GM12878 (cell line): ENCODE measurements at regions of chr19 and their contacts with region 1.

Region 1: GRCh38 chr19:19459707-19460251 is 54.3 kb downstream of the GATAD2A start:
- DNase-seq: no peak
- ATAC-seq: peak; percentile 75
- H3K4me3 ChIP-seq: peak overlapping the region; percentile 29; the same call in 1 of the 2 replicates
- H3K27ac ChIP-seq: peak overlapping the region; percentile 79
- H3K4me1 ChIP-seq: peaks cover 54% of the 10 kb centered on the region
- H3K27me3 ChIP-seq: no peaks in the 10 kb centered on the region
- CTCF ChIP-seq: no peak
- EP300 ChIP-seq: no peak
- POLR2A ChIP-seq: no peak; the same call in 1 of the 2 replicates
- RAD21 ChIP-seq: no peak

Region 2: GRCh38 chr19:19444681-19445155 is 15.1 kb before region 1 on chr19:
- CTCF ChIA-PET with region 1: interaction called, 7 read pairs
- POLR2A ChIA-PET with region 1: interaction called, 7 read pairs
- RAD21 ChIA-PET with region 1: interaction called, 5 read pairs
- SMC1A ChIA-PET with region 1: interaction called, 21 read pairs
- in situ Hi-C with region 1: no loop called
- intact Hi-C with region 1: no loop called
- DNase-seq: no peak
- ATAC-seq: peak; percentile 86
- H3K4me3 ChIP-seq: no peak overlapping the region; the same call in 1 of the 2 replicates
- H3K27ac ChIP-seq: peak overlapping the region; percentile 82
- H3K4me1 ChIP-seq: peaks cover 47% of the 10 kb centered on the region
- H3K27me3 ChIP-seq: no peaks in the 10 kb centered on the region
- CTCF ChIP-seq: no peak
- EP300 ChIP-seq: no peak
- POLR2A ChIP-seq: no peak
- RAD21 ChIP-seq: no peak